ENCODE measurements at regions of chr1 and their contacts with region 1.

Region 1: GRCh38 chr1:230917284-230918135 is 49.2 kb upstream of the C1orf198 start:
- DNase-seq: peak; percentile 90
- H3K4me3 ChIP-seq: no peak overlapping the region
- H3K27ac ChIP-seq: no peak overlapping the region
- H3K4me1 ChIP-seq: no peaks in the 10 kb centered on the region
- H3K27me3 ChIP-seq: no peaks in the 10 kb centered on the region
- CTCF ChIP-seq: peak; percentile 69

Region 2: DNA sequence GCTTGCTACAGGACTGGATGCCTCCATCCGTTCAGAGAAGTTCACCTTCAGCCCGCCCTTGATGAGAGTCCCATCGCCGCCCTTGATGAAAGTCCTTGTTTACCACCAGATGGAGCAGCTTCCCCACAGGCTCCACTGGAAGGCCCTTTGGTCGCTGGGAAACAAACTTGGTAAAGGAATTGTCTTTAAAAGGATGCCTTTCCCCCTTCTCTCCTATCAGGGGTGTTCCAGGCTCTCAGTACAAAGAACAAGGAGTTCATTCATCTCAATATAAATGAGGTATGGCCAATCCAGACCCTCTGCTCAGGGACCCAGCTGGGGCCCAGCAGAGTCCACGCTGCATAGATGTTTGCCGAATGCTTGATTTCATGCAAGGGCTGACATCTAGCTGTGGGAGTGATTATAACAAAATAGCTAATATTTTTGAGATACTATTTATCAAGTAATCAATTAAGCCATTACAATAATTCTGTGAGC is 119.5 kb before region 1 on chr1:
- intact Hi-C with region 1: loop called (anchors 5 kb)
- DNase-seq: peak; percentile 47
- H3K4me3 ChIP-seq: no peak overlapping the region
- H3K27ac ChIP-seq: no peak overlapping the region
- H3K4me1 ChIP-seq: no peaks in the 10 kb centered on the region
- H3K27me3 ChIP-seq: no peaks in the 10 kb centered on the region
- CTCF ChIP-seq: peak; percentile 33

Region 3: DNA sequence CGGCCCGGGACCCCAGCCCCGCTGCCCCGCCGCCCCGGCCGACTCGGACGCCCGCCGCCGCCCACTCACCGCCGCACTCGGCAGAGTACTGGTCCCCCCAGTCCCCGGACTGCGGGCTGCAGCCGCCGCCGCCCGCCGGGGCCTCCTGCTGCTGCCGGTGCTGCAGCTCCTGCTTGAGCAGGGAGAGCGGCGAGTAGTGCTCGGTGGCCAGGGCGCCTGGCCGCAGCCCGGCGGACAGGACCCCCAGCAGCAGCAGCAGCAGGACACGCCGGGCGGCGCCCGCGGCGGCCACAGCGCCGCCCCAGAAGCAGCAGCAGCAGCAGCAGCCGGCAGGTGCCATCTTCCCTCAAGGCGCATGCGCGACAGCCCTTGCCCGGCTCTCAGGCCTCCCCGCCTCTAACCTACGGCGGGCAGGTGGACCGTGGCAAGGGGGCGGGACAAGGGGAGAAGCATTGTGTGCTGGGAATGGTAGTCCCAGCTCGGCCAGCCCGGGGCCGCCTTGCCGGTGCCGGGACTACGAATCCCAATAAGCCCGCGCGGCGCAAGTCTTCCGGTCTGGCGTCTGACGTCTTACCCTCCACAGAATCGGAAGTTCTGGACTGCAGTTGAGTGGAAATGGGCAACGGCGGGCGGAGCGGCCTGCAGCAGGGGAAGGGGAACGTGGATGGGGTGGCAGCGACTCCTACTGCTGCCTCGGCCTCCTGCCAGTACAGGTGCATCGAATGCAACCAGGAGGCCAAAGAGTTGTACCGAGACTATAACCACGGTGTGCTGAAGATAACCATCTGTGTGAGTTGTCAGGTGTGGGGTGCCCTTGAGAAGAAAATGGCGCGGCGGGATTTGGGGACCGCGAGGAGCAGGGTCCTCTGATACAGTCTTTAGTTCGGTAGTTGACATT is 61.2 kb after region 1 on chr1 and contains the starts of genes ARV1 and TTC13:
- intact Hi-C with region 1: loop called (anchors 5 kb)
- DNase-seq: peak; percentile 98
- H3K4me3 ChIP-seq: peak within 1 kb of the TSS; percentile 77
- H3K27ac ChIP-seq: peak within 1 kb of the TSS; percentile 76
- H3K4me1 ChIP-seq: peaks cover 9% of the 10 kb centered on the region
- H3K27me3 ChIP-seq: no peaks in the 10 kb centered on the region
- CTCF ChIP-seq: peak; percentile 26
- total RNA-seq, gene ARV1: 29.3 to 39.6 TPM
- total RNA-seq, gene TTC13: 28.0 to 47.0 TPM

Region 4: GRCh38 chr1:231091831-231092301 is 174.4 kb after region 1 on chr1:
- intact Hi-C with region 1: loop called (anchors 5 kb)
- DNase-seq: peak; percentile 53
- H3K4me3 ChIP-seq: no peak overlapping the region
- H3K27ac ChIP-seq: no peak overlapping the region
- H3K4me1 ChIP-seq: no peaks in the 10 kb centered on the region
- H3K27me3 ChIP-seq: no peaks in the 10 kb centered on the region
- CTCF ChIP-seq: peak; percentile 50

Measured in colonic mucosa (tissue), 4 donors.